ENCODE measurements at regions of chr2 and their contacts with region 1.

Region 1: DNA sequence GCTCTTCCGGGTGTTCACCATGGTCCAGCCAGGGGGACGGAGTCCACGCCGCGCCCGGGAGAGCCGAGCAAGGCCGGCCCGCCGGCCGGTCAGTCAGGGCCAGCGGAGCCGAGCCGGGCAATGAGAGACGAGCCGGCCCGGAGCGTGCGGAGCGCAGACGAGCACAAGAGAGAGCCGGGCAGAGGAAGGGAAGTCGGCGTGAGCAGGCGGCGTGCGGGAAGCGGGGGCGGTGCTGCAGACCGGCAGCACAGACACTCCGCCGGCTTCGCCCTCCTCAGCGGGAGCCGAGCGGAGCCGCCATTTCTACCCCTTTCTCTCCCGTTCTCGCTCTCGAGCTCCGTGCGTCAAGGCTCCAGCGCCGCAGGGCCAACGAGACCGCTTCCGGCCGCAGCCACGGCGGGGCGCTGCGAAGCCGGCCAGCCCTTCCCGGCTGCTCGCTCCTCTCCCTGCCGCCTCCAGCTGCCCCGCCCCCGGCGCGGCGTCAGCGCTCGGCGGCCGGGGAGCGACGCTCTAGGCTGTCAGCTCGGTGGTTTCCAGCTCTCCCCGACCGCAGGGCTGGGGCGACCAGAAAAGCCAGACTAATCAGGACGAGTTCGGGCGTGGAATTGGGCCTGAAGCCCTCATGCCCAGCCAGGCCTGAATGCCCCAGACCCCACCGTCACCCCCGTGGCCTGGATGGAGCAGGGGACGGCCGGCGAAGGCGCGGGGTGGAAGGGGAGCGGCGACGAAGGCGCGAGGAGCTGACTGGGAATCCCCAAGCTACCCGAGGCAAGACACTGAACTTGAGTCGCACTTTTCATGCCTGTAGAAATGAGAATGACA is at the start of gene ATAD2B:
- DNase-seq: peak; percentile 73 to 97 (median 92)

Region 2: DNA sequence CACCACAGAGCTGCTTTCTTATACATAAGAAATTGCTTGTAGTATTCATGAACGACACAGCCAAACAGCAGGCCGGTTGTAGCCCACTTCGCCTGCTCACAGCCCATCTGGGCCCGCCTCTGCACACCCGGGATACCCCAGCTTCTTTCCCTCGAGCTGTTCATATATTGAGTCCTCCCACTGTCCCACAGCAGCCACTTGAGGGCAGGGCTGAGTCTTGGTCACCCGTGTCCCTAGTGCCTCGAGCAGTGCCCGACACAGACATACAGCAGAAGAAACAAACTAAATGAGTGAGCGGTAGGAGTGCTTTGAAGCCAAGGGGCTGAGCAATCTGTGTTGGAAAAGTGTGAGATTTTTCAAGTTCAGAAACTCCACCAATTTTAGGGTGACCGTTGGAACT is 290.5 kb before region 1 on chr2:
- intact Hi-C with region 1: no loop called
- DNase-seq: no peak

Region 3: GRCh38 chr2:24046930-24047702 is 120.2 kb after region 1 on chr2 and contains the start of gene WDCP:
- intact Hi-C with region 1: loop called (anchors 10 kb)
- DNase-seq: peak; percentile 91 to 100 (median 98)

Region 4: GRCh38 chr2:24075915-24076848 is 149.2 kb after region 1 on chr2 and contains the start of gene SF3B6:
- intact Hi-C with region 1: loop called (anchors 2 kb)
- DNase-seq: peak; percentile 92 to 99 (median 97)

Measured in head of caudate nucleus (tissue), 42 donors.